ENCODE measurements at regions of chr19 and their contacts with region 1.

Region 1: DNA sequence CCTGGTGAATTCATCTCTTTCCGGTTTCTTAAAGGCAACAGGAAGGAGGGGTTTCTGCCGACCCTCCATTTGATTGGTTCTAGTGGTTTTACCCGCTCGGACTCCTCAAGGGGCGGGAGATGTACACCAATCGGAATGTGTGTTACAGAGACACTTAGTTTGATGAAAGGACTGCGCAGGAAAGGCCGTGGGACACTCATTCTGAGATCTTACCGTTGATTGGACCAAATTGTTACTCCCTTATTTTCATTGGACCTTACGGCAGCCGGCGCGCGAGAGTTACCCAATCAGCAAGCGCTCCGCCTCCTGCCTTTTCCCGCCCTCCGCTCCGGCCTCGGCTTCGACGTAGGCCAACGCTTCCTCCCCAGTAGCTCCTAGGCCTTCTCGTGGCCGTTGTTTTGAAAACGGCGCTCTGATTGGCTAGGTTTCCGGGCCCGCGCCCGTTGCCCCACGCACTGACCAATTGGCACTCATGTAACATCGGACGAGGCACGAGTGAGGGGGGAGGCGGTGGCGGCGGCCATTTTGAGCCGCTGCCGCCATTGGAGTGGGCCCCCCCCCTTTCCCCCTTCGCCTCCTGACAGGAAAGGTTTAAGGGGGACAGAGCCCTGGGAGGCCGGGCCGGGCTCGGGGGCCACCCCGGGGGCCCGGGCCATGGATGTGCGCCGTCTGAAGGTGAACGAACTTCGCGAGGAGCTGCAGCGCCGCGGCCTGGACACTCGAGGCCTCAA is at the start of gene HNRNPUL1:
- DNase-seq: peak; percentile 99
- H3K4me3 Mint-ChIP-seq: peak within 1 kb of the TSS; percentile 94
- H3K27ac Mint-ChIP-seq: peak within 1 kb of the TSS; percentile 99
- H3K4me1 Mint-ChIP-seq: peaks cover 52% of the 10 kb centered on the region
- H3K27me3 Mint-ChIP-seq: no peaks in the 10 kb centered on the region
- total RNA-seq, gene HNRNPUL1: 254 and 264 TPM in 2 replicates

Region 2: DNA sequence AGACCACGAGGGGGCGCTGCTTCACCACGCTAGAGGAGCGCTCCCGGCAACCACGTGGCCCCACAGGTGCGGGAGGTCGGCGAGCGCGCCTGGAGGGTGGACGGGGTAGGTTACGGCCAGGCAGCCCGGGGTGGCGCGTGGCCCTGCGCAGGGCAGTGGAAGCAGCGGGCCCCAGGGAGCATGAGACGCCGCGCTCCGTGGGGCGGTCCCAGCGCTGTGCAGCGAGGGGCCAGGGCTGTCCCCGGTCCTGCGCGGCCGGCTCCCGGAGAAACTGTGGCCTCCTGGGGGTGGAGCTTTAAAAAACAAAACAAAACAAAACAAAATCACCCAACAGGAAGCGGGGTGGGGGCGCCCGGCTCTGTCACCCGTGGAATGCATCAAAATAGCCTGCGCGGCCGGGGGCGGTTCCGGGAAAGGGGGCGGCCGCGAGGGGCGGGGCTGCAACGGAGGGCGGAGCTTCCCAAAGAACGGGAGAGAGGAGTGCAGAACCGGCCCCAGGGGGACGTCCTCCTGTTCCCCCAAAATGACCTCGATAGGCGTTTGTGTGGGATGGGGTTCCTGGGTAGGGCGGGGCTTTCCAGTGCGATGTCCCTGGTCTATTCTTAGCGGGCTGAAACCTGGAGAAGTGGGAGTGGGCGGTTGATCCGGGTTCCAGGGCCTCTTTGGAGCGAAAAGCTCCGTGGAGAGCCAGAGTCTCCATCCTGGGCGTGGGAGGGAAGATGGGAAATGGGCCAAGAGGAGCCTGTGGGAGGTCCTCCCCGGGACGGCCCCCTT is 600.9 kb before region 1 on chr19:
- intact Hi-C with region 1: loop called (anchors 1 kb)
- DNase-seq: peak; percentile 87
- H3K4me3 Mint-ChIP-seq: peak overlapping the region; percentile 80
- H3K27ac Mint-ChIP-seq: peak overlapping the region; percentile 86
- H3K4me1 Mint-ChIP-seq: peaks cover 20% of the 10 kb centered on the region
- H3K27me3 Mint-ChIP-seq: peaks cover 2% of the 10 kb centered on the region

Region 3: GRCh38 chr19:40798223-40798996 is 465.6 kb before region 1 on chr19:
- intact Hi-C with region 1: loop called (anchors 1 kb)
- DNase-seq: peak; percentile 100
- H3K4me3 Mint-ChIP-seq: peak overlapping the region; percentile 87
- H3K27ac Mint-ChIP-seq: peak overlapping the region; percentile 92
- H3K4me1 Mint-ChIP-seq: peaks cover 56% of the 10 kb centered on the region
- H3K27me3 Mint-ChIP-seq: no peaks in the 10 kb centered on the region

Region 4: GRCh38 chr19:41016488-41017071 is 247.4 kb before region 1 on chr19:
- intact Hi-C with region 1: no loop called
- DNase-seq: no peak
- H3K4me3 Mint-ChIP-seq: no peak overlapping the region
- H3K27ac Mint-ChIP-seq: no peak overlapping the region
- H3K4me1 Mint-ChIP-seq: no peaks in the 10 kb centered on the region
- H3K27me3 Mint-ChIP-seq: peaks cover 20% of the 10 kb centered on the region

Region 5: DNA sequence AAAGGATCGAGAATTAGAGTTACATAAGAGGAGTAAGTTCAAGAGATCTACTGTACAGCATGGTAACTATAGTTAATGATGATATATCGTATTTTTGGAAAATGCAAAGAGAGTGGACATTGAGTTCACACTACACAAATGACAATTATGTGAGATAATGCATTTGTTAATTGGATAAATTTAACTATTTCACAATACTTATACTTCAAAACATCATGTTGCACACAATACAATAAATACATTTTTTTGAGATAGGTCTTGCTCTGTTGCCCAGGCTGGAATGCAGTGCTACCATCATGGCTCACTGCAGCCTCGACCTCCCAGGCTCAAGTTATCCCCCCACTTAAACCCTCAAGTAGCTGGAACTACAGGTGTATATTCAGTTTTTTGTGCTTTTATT is 157.8 kb before region 1 on chr19:
- intact Hi-C with region 1: no loop called
- DNase-seq: no peak
- H3K4me3 Mint-ChIP-seq: no peak overlapping the region
- H3K27ac Mint-ChIP-seq: no peak overlapping the region
- H3K4me1 Mint-ChIP-seq: no peaks in the 10 kb centered on the region
- H3K27me3 Mint-ChIP-seq: peaks cover 7% of the 10 kb centered on the region

Region 6: GRCh38 chr19:41225238-41226052 is 38.6 kb before region 1 on chr19:
- intact Hi-C with region 1: loop called (anchors 1 kb)
- DNase-seq: no peak
- H3K4me3 Mint-ChIP-seq: peak overlapping the region; percentile 77
- H3K27ac Mint-ChIP-seq: peak overlapping the region; percentile 91
- H3K4me1 Mint-ChIP-seq: peaks cover 24% of the 10 kb centered on the region
- H3K27me3 Mint-ChIP-seq: peaks cover 15% of the 10 kb centered on the region

Region 7: GRCh38 chr19:41353466-41354342 is 89.7 kb after region 1 on chr19 and contains the start of gene TGFB1:
- intact Hi-C with region 1: loop called (anchors 1 kb)
- DNase-seq: peak; percentile 90
- H3K4me3 Mint-ChIP-seq: peak within 1 kb of the TSS; percentile 95
- H3K27ac Mint-ChIP-seq: peak within 1 kb of the TSS; percentile 90
- H3K4me1 Mint-ChIP-seq: peaks cover 68% of the 10 kb centered on the region
- H3K27me3 Mint-ChIP-seq: no peaks in the 10 kb centered on the region
- total RNA-seq, gene TGFB1: 108 and 112 TPM in 2 replicates

Region 8: GRCh38 chr19:41531438-41532311 is 267.7 kb after region 1 on chr19:
- intact Hi-C with region 1: loop called (anchors 5 kb)
- DNase-seq: peak; percentile 87
- H3K4me3 Mint-ChIP-seq: peak overlapping the region; percentile 82
- H3K27ac Mint-ChIP-seq: peak overlapping the region; percentile 87
- H3K4me1 Mint-ChIP-seq: peaks cover 91% of the 10 kb centered on the region
- H3K27me3 Mint-ChIP-seq: no peaks in the 10 kb centered on the region

Measured in activated T-helper 1 cell treated with anti-CD3 and anti-CD28 coated beads, Interleukin-12 subunit alpha, Interleukin-12 subunit beta, Interleukin-2, Interleukin-4 antibody, amounts not matched to agents 30 ng/mL and 10 ng/mL and 1 ng/mL, durations not matched to agents 14 hours and 24 hours and 36 hours (primary cell).